PC-9 (cell line): ENCODE measurements at regions of chr6 and their contacts with region 1.

Region 1: DNA sequence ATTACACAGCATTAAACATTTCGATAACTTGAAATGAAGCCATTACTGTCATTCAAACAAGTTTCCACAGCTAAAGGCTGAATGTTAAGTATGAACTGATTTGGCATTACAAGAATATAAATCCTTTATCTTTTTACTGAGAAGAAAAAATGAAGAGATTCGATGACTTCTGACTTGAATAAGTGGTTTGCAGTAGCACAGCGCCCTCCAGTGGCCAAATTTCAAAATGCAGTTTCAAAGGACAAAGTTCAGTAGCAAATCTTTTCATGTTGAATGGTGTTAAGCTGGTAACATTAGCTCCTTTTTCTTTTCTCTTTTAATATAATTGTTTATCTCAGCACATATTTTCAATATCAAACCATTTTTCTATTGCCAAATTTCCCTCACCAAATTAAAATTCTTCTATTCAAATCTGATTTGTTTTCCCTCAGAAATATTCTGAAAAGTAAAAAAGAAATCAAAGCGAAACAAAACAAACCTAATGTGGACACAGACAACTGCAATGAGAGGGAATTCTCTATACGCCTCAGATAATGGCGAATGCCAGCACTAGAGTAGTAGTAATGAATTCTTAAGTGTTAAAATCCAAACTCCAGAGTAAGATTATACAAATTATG is 145.7 kb downstream of the BTBD9 start:
- DNase-seq: peak; percentile 56 to 71
- H3K4me3 ChIP-seq: no peak overlapping the region
- H3K27ac ChIP-seq: no peak overlapping the region
- H3K4me1 ChIP-seq: no peaks in the 10 kb centered on the region
- H3K27me3 ChIP-seq: no peaks in the 10 kb centered on the region
- CTCF ChIP-seq: peak; percentile 97

Region 2: GRCh38 chr6:37406726-37407356 is 1087.2 kb before region 1 on chr6:
- CTCF ChIA-PET with region 1: interaction called, 12 read pairs
- POLR2A ChIA-PET with region 1: no interaction called
- intact Hi-C with region 1: no loop called
- DNase-seq: no peak
- H3K4me3 ChIP-seq: no peak overlapping the region
- H3K27ac ChIP-seq: no peak overlapping the region
- H3K4me1 ChIP-seq: no peaks in the 10 kb centered on the region
- H3K27me3 ChIP-seq: no peaks in the 10 kb centered on the region
- CTCF ChIP-seq: no peak

Region 3: GRCh38 chr6:37538107-37538506 is 955.9 kb before region 1 on chr6:
- CTCF ChIA-PET with region 1: no interaction called
- POLR2A ChIA-PET with region 1: no interaction called
- intact Hi-C with region 1: loop called (anchors 5 kb)
- DNase-seq: peak in 1 of 2 experiments; percentile 50
- H3K4me3 ChIP-seq: no peak overlapping the region
- H3K27ac ChIP-seq: no peak overlapping the region
- H3K4me1 ChIP-seq: no peaks in the 10 kb centered on the region
- H3K27me3 ChIP-seq: no peaks in the 10 kb centered on the region
- CTCF ChIP-seq: peak; percentile 69

Region 4: GRCh38 chr6:38034274-38034914 is 459.6 kb before region 1 on chr6:
- CTCF ChIA-PET with region 1: interaction called, 3 read pairs
- POLR2A ChIA-PET with region 1: no interaction called
- intact Hi-C with region 1: loop called (anchors 5 kb)
- DNase-seq: no peak
- H3K4me3 ChIP-seq: no peak overlapping the region
- H3K27ac ChIP-seq: no peak overlapping the region
- H3K4me1 ChIP-seq: peaks cover 12% of the 10 kb centered on the region; the same call in 1 of the 2 replicates
- H3K27me3 ChIP-seq: no peaks in the 10 kb centered on the region
- CTCF ChIP-seq: peak; percentile 63

Region 5: DNA sequence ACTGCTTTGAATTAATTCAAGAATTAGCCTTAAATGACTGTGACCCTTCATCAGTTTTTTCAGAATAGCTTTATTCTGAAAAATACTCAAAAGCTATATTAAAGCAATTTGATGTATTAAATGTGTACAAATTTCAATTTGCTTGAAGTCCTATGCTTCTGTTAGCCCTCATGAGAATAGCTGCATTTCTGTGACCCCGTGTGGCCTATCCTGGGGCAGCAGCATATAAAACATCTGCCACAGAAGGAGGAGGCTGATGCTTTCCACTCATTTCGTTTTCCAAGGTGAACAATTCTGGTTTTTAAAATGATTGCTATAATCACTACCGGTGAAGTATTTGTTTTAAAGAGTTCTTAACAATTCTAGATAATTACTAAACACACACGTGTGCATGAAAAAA is 214.6 kb before region 1 on chr6:
- CTCF ChIA-PET with region 1: no interaction called
- POLR2A ChIA-PET with region 1: no interaction called
- intact Hi-C with region 1: no loop called
- DNase-seq: no peak
- H3K4me3 ChIP-seq: no peak overlapping the region
- H3K27ac ChIP-seq: no peak overlapping the region
- H3K4me1 ChIP-seq: peaks cover 3% of the 10 kb centered on the region; the same call in 1 of the 2 replicates
- H3K27me3 ChIP-seq: no peaks in the 10 kb centered on the region
- CTCF ChIP-seq: no peak; the same call in 1 of the 2 replicates

Region 6: GRCh38 chr6:38517005-38517404 is 23.0 kb after region 1 on chr6:
- CTCF ChIA-PET with region 1: no interaction called
- POLR2A ChIA-PET with region 1: no interaction called
- intact Hi-C with region 1: no loop called
- DNase-seq: no peak
- H3K4me3 ChIP-seq: no peak overlapping the region
- H3K27ac ChIP-seq: no peak overlapping the region
- H3K4me1 ChIP-seq: no peaks in the 10 kb centered on the region
- H3K27me3 ChIP-seq: no peaks in the 10 kb centered on the region
- CTCF ChIP-seq: no peak

Region 7: GRCh38 chr6:38836585-38836984 is 342.5 kb after region 1 on chr6:
- CTCF ChIA-PET with region 1: no interaction called
- POLR2A ChIA-PET with region 1: no interaction called
- intact Hi-C with region 1: no loop called
- DNase-seq: no peak
- H3K4me3 ChIP-seq: no peak overlapping the region
- H3K27ac ChIP-seq: no peak overlapping the region
- H3K4me1 ChIP-seq: no peaks in the 10 kb centered on the region
- H3K27me3 ChIP-seq: no peaks in the 10 kb centered on the region
- CTCF ChIP-seq: no peak